ENCODE measurements at regions of chr11 and their contacts with region 1.

Region 1: GRCh38 chr11:112113539-112114457 is 27.1 kb downstream of the SDHD start:
- DNase-seq: no peak
- ATAC-seq: peak; percentile 75 to 89 (median 83)
- H3K4me3 ChIP-seq: no peak overlapping the region
- H3K27ac ChIP-seq: no peak overlapping the region
- H3K4me1 ChIP-seq: peaks cover 17% of the 10 kb centered on the region
- H3K27me3 ChIP-seq: no peaks in the 10 kb centered on the region
- CTCF ChIP-seq: peak; percentile 64

Region 2: DNA sequence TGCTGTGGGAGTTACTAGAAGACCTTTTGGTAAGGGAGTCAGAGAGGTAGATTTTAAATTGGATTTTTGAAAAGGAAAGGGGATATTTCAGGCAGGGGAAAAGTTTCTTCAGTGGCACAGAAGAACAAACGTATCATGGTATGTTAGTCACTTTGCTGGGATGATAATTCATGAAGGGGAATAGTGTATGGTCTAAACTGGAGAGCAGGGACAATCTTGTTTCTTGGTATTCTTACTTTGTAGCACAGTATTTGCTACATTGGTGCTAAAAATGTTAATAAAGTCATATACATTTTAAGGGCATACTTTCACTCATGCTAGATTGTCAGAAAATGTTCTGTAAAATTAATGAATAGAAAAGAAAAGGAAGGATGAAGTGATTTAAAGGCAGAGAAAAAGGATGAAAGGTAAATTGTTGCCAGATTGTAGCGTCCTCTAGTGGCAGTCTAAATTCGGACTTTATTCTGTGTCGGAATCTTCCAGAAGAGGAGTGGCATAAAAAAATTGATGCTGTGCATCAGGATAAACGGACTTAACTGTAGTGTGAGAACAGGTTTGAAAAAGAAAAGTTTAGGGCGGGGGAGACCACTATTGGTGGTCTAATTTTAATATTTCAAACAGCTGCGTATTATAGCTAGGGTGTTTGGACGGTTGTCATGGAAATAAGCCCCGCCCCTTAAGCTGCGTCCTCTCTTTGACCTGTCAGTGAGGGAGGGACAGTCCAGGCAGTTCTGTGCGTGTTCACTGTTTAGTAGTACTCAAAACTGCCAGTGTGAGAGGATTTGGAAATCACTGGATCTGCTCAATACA is 61.2 kb after region 1 on chr11 and contains the start of gene BCO2:
- intact Hi-C with region 1: loop called (anchors 2 to 5 kb)
- DNase-seq: peak; percentile 81 to 90
- ATAC-seq: peak; percentile 88 to 94 (median 92)
- H3K4me3 ChIP-seq: peak within 1 kb of the TSS; percentile 65
- H3K27ac ChIP-seq: peak within 1 kb of the TSS; percentile 85
- H3K4me1 ChIP-seq: peaks cover 35% of the 10 kb centered on the region
- H3K27me3 ChIP-seq: no peaks in the 10 kb centered on the region
- CTCF ChIP-seq: peak; percentile 85
- total RNA-seq, gene BCO2: 4.7 to 42.4 (median 19.2) TPM

Region 3: GRCh38 chr11:112195906-112196305 is 82.1 kb after region 1 on chr11:
- intact Hi-C with region 1: no loop called
- DNase-seq: no peak
- ATAC-seq: no peak
- H3K4me3 ChIP-seq: no peak overlapping the region
- H3K27ac ChIP-seq: no peak overlapping the region
- H3K4me1 ChIP-seq: peaks cover 10% of the 10 kb centered on the region
- H3K27me3 ChIP-seq: no peaks in the 10 kb centered on the region
- CTCF ChIP-seq: no peak

Measured in psoas muscle (tissue), 8 donors.